Activated CD8-positive, alpha-beta memory T cell treated with anti-CD3 and anti-CD28 coated beads, Interleukin-2, amount 10 ng/mL, durations not matched to agents 7 days and 5 days (primary cell): ENCODE measurements at regions of chr19 and their contacts with region 1.

Region 1: DNA sequence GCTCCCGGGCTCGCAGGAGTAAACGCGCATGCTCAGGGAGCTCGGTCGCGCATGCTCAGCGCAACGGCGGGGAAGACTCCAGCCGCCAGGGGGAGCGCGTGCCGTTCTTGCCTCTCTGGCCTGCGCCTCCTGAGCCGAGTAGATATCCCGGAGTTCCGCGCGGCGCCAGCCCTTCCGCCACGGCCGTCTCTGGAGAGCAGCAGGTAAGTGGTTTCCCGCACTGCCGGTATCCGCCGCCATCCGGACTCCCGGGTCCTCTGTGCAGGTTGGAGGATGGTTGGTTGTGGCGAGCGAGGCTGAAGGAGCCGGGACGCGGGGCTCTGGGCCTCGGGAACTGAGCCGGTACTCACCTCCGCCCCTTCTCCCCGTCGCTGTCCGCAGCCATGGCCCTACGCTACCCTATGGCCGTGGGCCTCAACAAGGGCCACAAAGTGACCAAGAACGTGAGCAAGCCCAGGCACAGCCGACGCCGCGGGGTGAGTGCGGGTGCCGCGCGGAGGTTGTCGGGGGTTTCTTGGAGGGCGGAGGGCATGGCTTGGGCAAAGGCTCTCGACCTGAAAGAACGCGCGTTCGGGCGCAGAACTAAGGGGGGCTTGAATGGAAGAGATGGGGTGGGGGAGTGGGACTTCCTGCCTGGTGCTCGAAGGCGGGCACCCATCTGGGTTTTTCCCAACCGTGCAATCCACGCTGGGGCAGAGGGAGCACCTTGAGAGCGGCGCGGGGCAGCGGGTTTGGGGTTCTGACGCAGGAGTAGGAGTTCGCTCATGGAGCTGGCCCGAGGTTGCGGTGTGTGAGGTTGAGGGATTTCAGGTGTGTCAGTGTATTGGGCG is at the start of gene RPL36:
- DNase-seq: peak; percentile 99
- ATAC-seq: peak; percentile 63
- H3K4me3 Mint-ChIP-seq: peak within 1 kb of the TSS; percentile 98
- H3K27ac Mint-ChIP-seq: peak within 1 kb of the TSS; percentile 92
- H3K4me1 Mint-ChIP-seq: peaks cover 42% of the 10 kb centered on the region
- H3K27me3 Mint-ChIP-seq: no peaks in the 10 kb centered on the region
- total RNA-seq, gene RPL36: 976 to 1,078 TPM

Region 2: DNA sequence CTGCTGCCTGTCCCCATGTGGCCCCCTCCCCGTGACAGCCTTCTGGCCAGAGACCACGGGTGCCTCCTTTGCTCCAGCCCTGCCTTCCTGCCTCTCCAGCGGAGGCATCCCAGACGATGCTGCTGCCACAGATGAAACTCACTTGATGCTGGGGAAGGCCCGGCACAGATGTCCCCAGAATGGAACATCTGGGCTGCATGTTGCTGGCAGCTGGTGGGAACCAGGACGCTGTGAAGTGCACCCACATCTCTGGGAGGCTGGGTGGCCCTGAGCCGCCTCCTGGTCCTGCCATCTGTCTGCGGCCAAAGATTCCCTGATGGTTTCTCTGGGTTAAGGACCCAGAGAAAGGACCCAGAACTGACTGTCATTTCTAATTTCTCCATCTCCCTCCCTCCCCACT is 297.9 kb before region 1 on chr19:
- CTCF ChIA-PET with region 1: no interaction called
- DNase-seq: no peak
- ATAC-seq: no peak
- H3K4me3 Mint-ChIP-seq: no peak overlapping the region
- H3K27ac Mint-ChIP-seq: no peak overlapping the region
- H3K4me1 Mint-ChIP-seq: no peaks in the 10 kb centered on the region
- H3K27me3 Mint-ChIP-seq: peaks cover 18% of the 10 kb centered on the region

Region 3: DNA sequence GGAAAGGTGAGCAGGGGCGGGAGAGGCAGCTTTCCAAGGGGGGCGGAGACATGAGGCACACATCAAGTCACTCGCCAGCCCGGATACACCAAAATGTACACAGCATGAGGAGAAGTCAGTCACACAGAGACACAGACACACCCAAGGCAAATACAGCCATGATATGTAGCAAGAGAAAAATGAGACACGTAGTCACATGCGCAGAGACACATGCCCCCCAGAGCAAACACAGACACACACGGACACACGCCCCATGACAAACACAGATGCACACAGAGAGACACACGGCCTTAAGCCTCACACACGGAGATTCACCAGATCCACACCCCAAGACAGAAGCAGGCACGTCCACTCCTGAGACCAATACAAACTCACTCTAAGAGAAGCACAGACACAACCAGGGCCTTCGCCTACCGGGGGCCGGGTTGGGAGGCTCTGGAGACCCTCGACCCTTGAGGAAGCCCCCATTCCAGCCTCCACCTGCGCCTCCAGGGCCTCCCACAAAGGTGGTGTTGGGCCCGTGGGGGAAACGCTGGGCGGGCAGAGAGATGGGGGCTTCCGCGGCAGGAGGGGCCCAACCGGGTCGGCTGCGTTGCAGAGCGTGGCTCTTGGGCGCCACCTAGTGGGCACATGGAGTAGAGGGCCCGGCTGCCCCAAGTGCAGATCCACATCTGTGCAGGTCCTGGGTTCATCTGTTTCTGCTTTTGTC is 112.4 kb before region 1 on chr19:
- CTCF ChIA-PET with region 1: no interaction called
- DNase-seq: peak; percentile 72
- ATAC-seq: peak; percentile 82
- H3K4me3 Mint-ChIP-seq: no peak overlapping the region
- H3K27ac Mint-ChIP-seq: no peak overlapping the region
- H3K4me1 Mint-ChIP-seq: peaks cover 3% of the 10 kb centered on the region
- H3K27me3 Mint-ChIP-seq: no peaks in the 10 kb centered on the region

Region 4: GRCh38 chr19:5622463-5623396 is 67.6 kb before region 1 on chr19 and contains the starts of genes SAFB and SAFB2:
- CTCF ChIA-PET with region 1: interaction called, 21 read pairs
- DNase-seq: peak; percentile 100
- ATAC-seq: peak; percentile 92
- H3K4me3 Mint-ChIP-seq: peak within 1 kb of the TSS; percentile 99
- H3K27ac Mint-ChIP-seq: peak within 1 kb of the TSS; percentile 100
- H3K4me1 Mint-ChIP-seq: peaks cover 63% of the 10 kb centered on the region
- H3K27me3 Mint-ChIP-seq: peaks cover 5% of the 10 kb centered on the region
- total RNA-seq, gene SAFB: 134 to 152 TPM
- total RNA-seq, gene SAFB2: 110 to 125 TPM

Region 5: GRCh38 chr19:5669212-5669611 is 21.1 kb before region 1 on chr19:
- CTCF ChIA-PET with region 1: interaction called, 10 read pairs
- DNase-seq: no peak
- ATAC-seq: peak; percentile 20
- H3K4me3 Mint-ChIP-seq: no peak overlapping the region
- H3K27ac Mint-ChIP-seq: no peak overlapping the region
- H3K4me1 Mint-ChIP-seq: peaks cover 26% of the 10 kb centered on the region
- H3K27me3 Mint-ChIP-seq: no peaks in the 10 kb centered on the region

Region 6: GRCh38 chr19:5680083-5680436 is 10.3 kb before region 1 on chr19:
- CTCF ChIA-PET with region 1: interaction called, 12 read pairs
- DNase-seq: no peak
- ATAC-seq: no peak
- H3K4me3 Mint-ChIP-seq: peak overlapping the region; percentile 95
- H3K27ac Mint-ChIP-seq: peak overlapping the region; percentile 95
- H3K4me1 Mint-ChIP-seq: peaks cover 18% of the 10 kb centered on the region
- H3K27me3 Mint-ChIP-seq: no peaks in the 10 kb centered on the region

Region 7: DNA sequence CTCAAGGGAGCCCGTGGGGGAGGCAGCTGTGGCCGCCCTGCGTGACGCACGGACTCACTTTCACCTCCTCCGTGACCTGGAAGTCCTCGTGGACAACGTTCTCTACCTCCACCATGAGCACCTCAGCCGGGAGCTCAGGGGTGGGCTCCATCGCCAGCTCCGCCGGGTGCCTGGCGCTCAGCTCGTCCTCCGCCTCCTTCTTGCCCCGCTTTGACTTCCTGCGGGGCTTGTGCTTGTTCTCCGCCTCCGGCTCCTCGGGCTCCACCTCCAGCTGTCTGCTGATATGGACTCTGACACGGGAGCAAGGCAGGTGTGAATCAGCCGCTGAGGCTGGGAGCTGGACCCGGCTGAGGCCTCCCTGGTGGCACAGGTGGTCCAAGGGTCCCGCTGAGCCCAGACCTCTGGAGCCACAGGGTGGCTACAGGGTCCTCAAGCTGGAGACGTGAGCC is 21.4 kb after region 1 on chr19:
- CTCF ChIA-PET with region 1: interaction called, 122 read pairs
- DNase-seq: no peak
- ATAC-seq: no peak
- H3K4me3 Mint-ChIP-seq: no peak overlapping the region
- H3K27ac Mint-ChIP-seq: no peak overlapping the region
- H3K4me1 Mint-ChIP-seq: peaks cover 10% of the 10 kb centered on the region
- H3K27me3 Mint-ChIP-seq: no peaks in the 10 kb centered on the region

Region 8: DNA sequence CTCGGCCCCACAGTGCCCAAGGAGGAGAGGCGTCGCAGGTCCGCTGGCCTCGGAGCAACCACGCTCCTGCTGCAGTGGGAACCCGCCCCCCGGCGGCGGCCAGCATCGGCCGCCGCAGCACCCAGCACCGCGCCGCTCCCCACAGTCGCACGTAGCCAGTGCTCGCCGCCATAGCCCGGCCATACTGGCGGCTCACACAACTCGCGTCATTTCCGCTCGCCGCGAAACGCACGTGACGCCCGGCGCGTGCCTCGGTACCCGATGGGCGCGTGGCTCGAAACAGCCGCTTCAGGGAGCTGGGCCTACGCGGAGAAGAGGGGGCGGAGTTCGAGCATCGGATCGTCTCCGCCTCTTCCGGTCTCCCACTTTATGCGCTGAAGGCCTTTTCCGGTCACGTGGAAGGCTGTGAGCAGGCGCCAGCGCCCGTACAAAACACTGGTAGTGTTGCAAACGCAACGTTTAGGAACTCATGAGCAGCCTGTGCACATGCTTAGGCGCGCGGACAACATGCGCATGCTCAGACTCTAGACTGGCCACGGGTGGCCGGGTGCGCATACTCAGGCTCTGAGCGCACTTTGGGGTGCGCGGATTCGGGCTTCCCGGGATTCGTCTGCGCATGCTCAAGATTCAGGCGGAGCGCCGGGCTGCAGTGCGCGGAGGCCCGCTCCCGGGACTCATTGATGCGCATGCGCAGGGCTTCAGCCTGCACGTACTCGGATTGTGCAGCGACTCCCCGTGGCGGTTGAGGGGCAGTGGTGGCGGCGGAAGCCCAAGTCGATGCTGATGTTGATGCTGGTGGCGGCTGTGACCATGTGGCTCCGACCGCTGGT is 29.8 kb after region 1 on chr19 and contains the starts of genes CATSPERD and LONP1:
- CTCF ChIA-PET with region 1: interaction called, 122 read pairs
- DNase-seq: peak; percentile 99
- ATAC-seq: peak; percentile 88
- H3K4me3 Mint-ChIP-seq: peak within 1 kb of the TSS; percentile 92
- H3K27ac Mint-ChIP-seq: peak within 1 kb of the TSS; percentile 98
- H3K4me1 Mint-ChIP-seq: peaks cover 37% of the 10 kb centered on the region
- H3K27me3 Mint-ChIP-seq: no peaks in the 10 kb centered on the region
- total RNA-seq, gene CATSPERD: not detected
- total RNA-seq, gene LONP1: 134 to 141 TPM

Region 9: DNA sequence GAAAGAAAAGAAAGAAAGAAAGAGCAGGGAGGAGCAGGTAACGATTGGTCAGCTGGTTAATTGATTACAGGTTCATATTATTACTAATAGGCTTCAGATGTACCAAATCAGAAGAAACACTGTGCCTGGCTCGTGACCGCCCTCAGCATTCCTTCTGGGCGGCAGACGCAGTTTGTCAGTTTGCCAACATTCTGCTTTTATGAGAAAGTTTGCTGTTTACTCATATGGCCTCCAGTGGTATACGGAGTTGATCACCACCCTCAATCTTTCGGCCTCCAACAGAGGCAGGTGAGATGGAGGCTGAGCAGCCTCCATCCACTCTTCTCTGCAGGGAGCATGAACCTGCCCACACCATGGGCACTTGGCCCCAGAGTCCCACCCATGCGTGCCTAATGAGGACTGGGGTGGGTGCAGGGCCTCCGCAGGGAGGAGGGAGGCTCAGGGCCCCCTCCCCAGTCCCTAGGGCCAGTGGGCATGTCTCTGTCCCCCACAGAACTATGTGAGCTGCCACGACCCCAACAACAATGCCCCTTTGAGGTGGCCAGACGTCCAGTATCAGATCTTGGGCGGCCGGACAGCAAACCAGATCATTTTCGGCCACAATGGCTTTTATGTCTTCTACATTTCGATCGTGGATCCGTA is 85.4 kb after region 1 on chr19:
- CTCF ChIA-PET with region 1: no interaction called
- DNase-seq: no peak
- ATAC-seq: no peak
- H3K4me3 Mint-ChIP-seq: no peak overlapping the region
- H3K27ac Mint-ChIP-seq: no peak overlapping the region
- H3K4me1 Mint-ChIP-seq: no peaks in the 10 kb centered on the region
- H3K27me3 Mint-ChIP-seq: no peaks in the 10 kb centered on the region

Region 10: DNA sequence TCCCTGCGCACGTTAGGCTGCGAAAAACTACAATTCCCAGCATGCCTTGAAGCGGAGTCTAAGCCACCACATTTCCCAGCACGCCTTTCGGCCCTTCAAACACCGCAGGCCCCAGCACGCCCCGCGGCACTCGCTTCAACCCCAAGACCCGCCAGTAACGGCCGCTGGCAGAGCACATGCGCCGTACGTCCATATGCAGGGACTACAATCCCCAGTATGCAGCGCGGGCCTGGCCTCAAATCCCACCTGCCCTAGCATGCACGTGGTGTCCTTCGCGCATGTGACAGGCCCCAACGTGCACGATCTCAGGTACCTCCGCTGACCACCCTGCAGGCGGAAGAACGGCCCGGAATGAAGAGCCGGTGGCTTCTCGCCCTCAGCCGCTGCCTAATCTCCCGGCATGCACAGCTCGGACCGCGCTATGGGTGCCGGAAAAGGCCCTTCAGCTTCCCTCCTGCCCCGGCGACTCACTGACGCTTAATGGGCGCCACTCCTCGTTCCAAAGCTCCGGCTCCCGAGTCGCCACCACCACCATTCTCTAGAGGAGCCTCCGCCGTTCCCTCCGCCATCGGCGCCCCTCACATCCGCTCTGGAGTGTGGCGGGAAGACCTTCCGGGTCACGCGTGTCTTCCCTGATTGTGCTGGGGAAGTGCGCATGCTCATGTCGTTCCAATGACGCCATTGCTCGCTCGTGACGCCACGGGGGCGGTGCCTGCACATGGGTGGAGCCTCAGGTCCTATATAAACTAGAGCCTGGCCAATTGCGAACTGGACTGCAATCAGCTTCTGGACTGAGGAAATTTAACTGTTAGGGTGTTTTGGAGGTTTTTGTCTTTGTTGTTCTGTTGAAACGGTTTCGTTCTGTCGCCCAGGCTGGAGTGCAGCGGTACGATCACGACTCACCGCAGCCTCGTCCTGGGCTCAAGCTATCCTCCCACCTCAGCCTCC is 100.5 kb after region 1 on chr19 and contains the start of gene DUS3L:
- CTCF ChIA-PET with region 1: interaction called, 15 read pairs
- DNase-seq: peak; percentile 99
- ATAC-seq: peak; percentile 94
- H3K4me3 Mint-ChIP-seq: peak within 1 kb of the TSS; percentile 89
- H3K27ac Mint-ChIP-seq: peak within 1 kb of the TSS; percentile 99
- H3K4me1 Mint-ChIP-seq: peaks cover 12% of the 10 kb centered on the region
- H3K27me3 Mint-ChIP-seq: no peaks in the 10 kb centered on the region
- total RNA-seq, gene DUS3L: 53.0 to 64.0 TPM